GM10248 (cell line): ENCODE measurements at regions of chr18 and their contacts with region 1.

Region 1: DNA sequence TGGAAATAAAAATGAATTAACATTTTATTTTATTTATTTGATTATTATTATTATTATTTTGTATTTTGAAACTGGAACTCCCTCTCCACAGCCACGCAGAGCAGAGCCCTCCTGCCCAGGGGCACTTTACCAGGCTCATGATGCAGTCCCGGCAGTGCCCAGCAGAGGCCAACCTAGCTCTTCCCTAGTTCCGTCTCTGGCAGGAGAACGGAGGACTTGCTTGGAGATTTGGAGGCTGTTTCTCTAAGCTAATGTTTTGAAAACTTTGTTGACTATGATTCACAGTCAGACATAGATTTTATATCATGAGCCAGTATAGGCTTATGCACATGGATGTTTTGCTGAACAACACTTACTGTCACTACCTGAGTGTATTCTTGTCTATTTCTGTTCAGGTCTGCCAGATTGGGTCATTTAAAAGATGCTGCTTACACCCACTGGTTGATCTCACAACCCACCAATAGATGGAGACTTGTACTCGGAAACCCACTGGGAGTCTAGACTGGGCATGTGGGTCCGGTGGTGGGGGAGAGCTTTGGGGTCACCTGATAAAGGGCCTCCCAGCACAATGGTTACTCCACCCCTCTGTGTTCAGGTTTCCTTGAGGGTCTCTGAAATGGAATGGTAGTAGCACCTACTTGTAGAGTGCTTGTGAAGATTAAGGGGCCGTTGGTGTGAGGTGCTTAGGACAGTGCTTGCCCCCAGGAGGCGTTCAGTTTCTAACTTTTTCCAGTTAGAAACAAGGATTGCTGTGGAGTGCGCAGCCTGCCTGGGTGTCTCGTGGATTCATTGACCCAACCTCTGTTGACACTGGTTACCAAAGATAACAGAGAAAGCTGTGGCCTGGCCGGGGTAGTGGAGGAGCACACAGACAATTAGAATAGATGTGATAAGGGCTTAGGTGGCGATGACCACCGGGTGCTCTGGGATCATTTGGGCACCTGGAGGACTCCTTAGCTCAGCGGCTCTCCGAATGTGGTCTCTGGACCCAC is 177.3 kb downstream of the HAUS1 start:
- DNase-seq: peak; percentile 71
- CTCF ChIP-seq: peak; percentile 90

Region 2: DNA sequence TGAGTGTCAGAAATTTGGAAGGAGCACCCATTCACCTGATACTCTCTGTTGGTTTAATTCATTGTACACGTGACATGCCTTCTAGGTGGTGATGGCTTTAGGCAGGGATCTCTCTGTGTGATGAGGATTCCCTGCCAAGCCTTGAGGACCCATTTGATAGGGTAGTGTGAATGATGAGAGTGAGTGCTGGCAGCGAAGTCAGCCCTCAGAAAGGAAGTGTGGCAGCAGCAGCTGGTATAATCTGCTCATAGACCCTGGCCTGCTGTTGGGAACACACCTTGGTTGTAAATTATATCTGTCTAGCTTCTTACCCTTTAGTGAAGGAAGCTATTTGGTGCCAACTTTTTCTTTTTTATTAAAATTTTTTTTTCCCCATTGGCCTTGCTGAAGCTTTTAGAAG is 12.8 kb before region 1 on chr18:
- CTCF ChIA-PET with region 1: interaction called, 12 read pairs
- POLR2A ChIA-PET with region 1: no interaction called
- DNase-seq: no peak
- CTCF ChIP-seq: no peak

Region 3: DNA sequence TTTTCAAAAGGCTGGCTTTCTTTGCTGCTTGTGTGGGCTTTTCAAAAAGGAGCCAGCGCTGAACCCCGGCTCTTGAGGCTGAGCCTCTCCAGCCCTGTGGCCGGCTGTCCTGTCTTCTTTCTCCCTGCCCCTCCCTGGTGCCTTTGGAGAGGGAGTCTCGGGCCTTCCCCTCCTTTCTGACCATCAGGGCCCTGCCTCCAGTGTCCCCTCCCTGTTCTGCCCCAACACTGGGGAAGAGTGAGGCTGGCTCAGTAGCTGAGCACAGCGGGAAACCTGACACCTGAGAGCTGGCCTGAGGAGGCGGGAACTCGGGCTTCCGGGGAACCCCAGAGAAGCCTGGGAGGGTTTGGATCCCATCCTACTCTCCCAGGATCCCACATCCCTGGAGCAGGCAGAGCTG is 143.4 kb after region 1 on chr18:
- CTCF ChIA-PET with region 1: no interaction called
- POLR2A ChIA-PET with region 1: no interaction called
- DNase-seq: no peak
- CTCF ChIP-seq: no peak

Region 4: GRCh38 chr18:46481048-46481846 is 199.8 kb after region 1 on chr18:
- CTCF ChIA-PET with region 1: interaction called, 17 read pairs
- POLR2A ChIA-PET with region 1: no interaction called
- DNase-seq: peak; percentile 42
- CTCF ChIP-seq: peak; percentile 43

Region 5: DNA sequence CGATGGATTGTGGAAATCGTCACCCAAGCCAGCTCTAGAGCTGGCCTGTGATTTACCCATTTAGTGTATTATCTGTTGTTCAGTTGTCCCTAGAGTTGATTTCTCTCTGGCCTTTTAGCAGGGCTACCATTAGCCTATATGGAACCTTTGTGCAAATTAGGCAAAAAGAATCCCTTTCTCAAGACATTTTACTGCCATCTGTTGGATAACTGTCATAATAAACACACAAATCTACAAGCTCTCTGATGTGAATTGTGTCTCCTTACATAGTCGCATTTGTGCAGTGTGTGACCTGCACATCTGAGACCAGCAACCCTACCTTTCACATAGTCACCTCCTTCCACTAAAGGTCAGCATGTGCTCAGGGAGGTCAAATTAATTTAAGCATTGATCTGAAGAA is 341.5 kb after region 1 on chr18:
- CTCF ChIA-PET with region 1: interaction called, 11 read pairs
- POLR2A ChIA-PET with region 1: no interaction called
- DNase-seq: no peak
- CTCF ChIP-seq: no peak